Activated CD8-positive, alpha-beta T cell treated with anti-CD3 and anti-CD28 coated beads, Interleukin-2, amount 10 ng/mL, durations not matched to agents 7 days and 5 days (primary cell): ENCODE measurements at regions of chr5 and their contacts with region 1.

Region 1: GRCh38 chr5:132490486-132491367 is at the start of gene IRF1:
- DNase-seq: peak; percentile 98
- ATAC-seq: peak; percentile 70
- H3K4me3 Mint-ChIP-seq: peak within 1 kb of the TSS; percentile 92
- H3K27ac Mint-ChIP-seq: peak within 1 kb of the TSS; percentile 97
- H3K4me1 Mint-ChIP-seq: peaks cover 68% of the 10 kb centered on the region
- H3K27me3 Mint-ChIP-seq: no peaks in the 10 kb centered on the region
- total RNA-seq, gene IRF1: 221 to 228 TPM

Region 2: DNA sequence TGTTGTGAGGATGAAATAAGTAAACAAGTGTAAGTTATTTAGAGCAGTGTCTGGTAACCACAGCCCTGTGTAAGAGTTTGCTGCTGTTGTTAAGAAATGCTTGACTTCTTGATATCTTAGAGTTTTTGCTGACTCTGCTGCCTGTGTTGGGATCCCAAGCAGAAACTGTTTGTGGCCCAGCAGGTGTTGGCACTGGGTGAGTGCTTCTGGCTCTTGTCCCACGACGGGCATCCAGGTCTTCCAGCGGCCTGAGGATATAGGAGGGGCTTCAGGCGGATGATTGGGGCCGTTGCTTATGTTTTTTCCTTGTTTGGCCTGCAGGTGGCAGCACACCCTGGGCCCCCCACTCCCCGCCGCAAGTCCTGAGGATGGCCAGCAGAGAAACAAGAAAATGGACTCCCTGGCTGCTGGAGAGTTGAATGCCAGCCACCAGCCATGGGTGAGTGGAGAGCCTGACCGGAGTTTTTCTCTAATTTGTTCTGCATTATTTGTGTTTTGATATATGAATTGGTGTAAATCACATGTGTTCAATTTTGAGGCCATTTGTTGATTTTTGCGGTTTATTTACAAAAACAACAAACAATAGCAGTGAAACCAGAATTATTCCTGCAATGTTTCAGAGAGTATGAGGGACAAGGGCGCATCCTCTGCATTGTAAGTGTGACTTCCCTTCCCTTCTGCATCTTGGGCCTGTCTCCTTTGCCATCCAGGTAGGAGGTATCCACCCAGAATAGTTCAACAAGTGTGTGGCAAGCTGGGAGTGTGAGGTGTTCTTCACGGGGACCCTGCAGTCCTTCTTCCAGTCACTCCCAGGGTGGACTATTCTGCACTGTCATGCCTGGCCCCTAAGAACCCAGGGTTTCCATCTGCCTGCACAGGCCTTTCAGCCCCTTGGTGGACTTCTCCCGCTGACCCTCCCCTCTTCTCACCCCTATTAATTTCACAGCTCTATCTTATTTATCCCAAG is 70.9 kb before region 1 on chr5:
- CTCF ChIA-PET with region 1: interaction called, 52 read pairs
- POLR2A ChIA-PET with region 1: interaction called, 435 read pairs
- DNase-seq: peak; percentile 76
- ATAC-seq: peak; percentile 64
- H3K4me3 Mint-ChIP-seq: peak overlapping the region; percentile 69
- H3K27ac Mint-ChIP-seq: peak overlapping the region; percentile 91
- H3K4me1 Mint-ChIP-seq: peaks cover 95% of the 10 kb centered on the region
- H3K27me3 Mint-ChIP-seq: no peaks in the 10 kb centered on the region

Region 3: GRCh38 chr5:132437604-132438266 is 53.0 kb before region 1 on chr5:
- CTCF ChIA-PET with region 1: interaction called, 6 read pairs
- POLR2A ChIA-PET with region 1: interaction called, 435 read pairs
- DNase-seq: peak; percentile 84
- ATAC-seq: peak; percentile 94
- H3K4me3 Mint-ChIP-seq: peak overlapping the region; percentile 66
- H3K27ac Mint-ChIP-seq: peak overlapping the region; percentile 83
- H3K4me1 Mint-ChIP-seq: peaks cover 90% of the 10 kb centered on the region
- H3K27me3 Mint-ChIP-seq: no peaks in the 10 kb centered on the region

Region 4: DNA sequence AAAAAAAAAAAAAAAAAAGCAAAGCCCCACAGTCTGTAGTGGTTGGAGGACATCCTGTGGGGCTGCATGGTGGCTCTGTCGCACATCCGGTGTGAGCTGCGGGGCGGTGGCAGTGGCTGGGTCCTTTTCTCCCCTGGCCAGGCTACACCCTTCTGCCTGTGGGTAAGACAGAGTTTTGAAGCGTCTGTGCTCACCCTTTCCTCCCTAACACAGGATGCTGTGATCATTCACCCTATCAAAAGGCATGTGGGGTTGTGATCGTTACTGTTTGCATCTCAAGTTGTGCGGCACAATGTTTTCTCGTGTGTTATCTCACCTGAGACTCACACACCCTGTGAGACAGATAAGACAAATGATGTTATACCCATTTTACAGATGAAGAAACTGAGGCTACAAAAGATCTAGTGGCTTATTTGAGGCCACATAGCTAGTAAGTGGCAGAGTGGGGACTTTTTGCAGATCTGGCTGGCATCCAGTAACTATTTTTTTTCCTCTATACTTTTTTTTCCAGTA is 17.7 kb before region 1 on chr5:
- CTCF ChIA-PET with region 1: interaction called, 30 read pairs
- POLR2A ChIA-PET with region 1: interaction called, 720 read pairs
- DNase-seq: peak; percentile 95
- ATAC-seq: peak; percentile 63
- H3K4me3 Mint-ChIP-seq: peak overlapping the region; percentile 42
- H3K27ac Mint-ChIP-seq: peak overlapping the region; percentile 94
- H3K4me1 Mint-ChIP-seq: peaks cover 92% of the 10 kb centered on the region
- H3K27me3 Mint-ChIP-seq: no peaks in the 10 kb centered on the region

Region 5: GRCh38 chr5:132629230-132629944 is 138.7 kb after region 1 on chr5:
- CTCF ChIA-PET with region 1: no interaction called
- POLR2A ChIA-PET with region 1: no interaction called
- DNase-seq: no peak
- ATAC-seq: peak; percentile 63
- H3K4me3 Mint-ChIP-seq: peak overlapping the region; percentile 32
- H3K27ac Mint-ChIP-seq: peak overlapping the region; percentile 86
- H3K4me1 Mint-ChIP-seq: peaks cover 42% of the 10 kb centered on the region
- H3K27me3 Mint-ChIP-seq: no peaks in the 10 kb centered on the region

Region 6: DNA sequence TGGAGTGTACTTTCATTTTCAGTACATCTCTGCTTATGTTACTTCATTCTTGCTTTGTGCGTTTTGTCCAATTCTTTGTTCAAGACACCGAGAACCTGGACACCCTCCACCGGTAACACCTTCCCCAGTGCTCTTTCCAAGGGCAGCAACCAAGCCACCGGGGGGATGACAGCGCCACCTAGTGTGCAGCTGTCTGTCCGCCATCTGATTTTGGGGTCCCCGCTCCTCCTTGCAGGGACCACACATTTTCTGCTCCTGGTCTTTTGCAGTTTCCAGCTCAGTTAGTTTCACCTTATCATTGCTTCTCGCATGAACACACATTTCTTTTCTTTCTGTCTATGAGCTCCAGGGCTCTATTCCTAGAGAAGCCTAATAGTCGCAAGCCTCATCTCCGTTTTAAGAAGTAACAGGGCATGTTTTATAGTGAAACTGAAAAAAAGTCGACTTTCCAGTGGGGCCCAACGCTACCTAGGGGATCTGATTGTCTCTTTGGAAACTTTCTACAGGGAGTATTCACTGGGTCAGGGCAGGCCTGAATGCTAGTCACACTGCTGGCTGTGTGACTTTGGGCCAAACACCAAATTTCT is 969.5 kb after region 1 on chr5:
- CTCF ChIA-PET with region 1: no interaction called
- POLR2A ChIA-PET with region 1: no interaction called
- DNase-seq: peak; percentile 53
- ATAC-seq: no peak
- H3K4me3 Mint-ChIP-seq: no peak overlapping the region
- H3K27ac Mint-ChIP-seq: no peak overlapping the region
- H3K4me1 Mint-ChIP-seq: no peaks in the 10 kb centered on the region
- H3K27me3 Mint-ChIP-seq: no peaks in the 10 kb centered on the region